G401 (cell line): ENCODE measurements at regions of chr17 and their contacts with region 1.

Region 1: DNA sequence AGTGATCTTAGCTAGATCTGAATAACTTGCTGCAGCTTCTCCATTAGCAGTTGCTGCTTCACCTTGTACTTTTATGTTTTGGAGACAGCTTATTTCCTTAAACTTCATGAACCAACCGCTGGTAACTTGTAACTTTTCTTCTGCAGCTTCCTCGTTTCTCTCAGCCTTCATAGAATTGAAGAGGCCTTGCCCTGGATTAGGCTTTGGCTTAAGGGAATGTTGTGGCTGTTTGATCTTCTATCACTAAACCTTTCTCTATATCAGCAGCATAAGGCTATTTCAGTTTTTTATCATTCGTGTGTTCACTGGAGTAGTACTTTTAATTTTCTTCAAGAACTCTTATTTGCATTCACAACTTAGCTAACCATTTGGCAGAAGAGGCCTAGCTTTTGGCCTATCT is 21.5 kb upstream of the TMEM92 start:
- DNase-seq: no peak

Region 2: GRCh38 chr17:50209472-50210239 is 43.1 kb before region 1 on chr17:
- in situ Hi-C with region 1: loop called (anchors 5 kb)
- DNase-seq: peak; percentile 34